ENCODE measurements at regions of chr22 and their contacts with region 1.

Region 1: GRCh38 chr22:23178512-23179254 is 1.6 kb upstream of the BCR start:
- DNase-seq: peak; percentile 55 to 63
- ATAC-seq: peak; percentile 54 to 82; a peak in 4 of 6 replicates
- H3K4me3 ChIP-seq: no peak overlapping the region
- H3K27ac ChIP-seq: no peak overlapping the region
- H3K4me1 ChIP-seq: peaks cover 28% of the 10 kb centered on the region
- CTCF ChIP-seq: peak; percentile 83
- EP300 ChIP-seq: no peak
- POLR2A ChIP-seq: no peak
- RAD21 ChIP-seq: peak; percentile 86 to 91

Region 2: GRCh38 chr22:23163665-23164064 is 15.0 kb before region 1 on chr22:
- CTCF ChIA-PET with region 1: interaction called, 10 read pairs
- POLR2A ChIA-PET with region 1: no interaction called
- DNase-seq: no peak
- ATAC-seq: no peak
- H3K4me3 ChIP-seq: no peak overlapping the region
- H3K27ac ChIP-seq: no peak overlapping the region
- H3K4me1 ChIP-seq: no peaks in the 10 kb centered on the region
- CTCF ChIP-seq: no peak
- EP300 ChIP-seq: no peak
- POLR2A ChIP-seq: no peak
- RAD21 ChIP-seq: no peak

Region 3: DNA sequence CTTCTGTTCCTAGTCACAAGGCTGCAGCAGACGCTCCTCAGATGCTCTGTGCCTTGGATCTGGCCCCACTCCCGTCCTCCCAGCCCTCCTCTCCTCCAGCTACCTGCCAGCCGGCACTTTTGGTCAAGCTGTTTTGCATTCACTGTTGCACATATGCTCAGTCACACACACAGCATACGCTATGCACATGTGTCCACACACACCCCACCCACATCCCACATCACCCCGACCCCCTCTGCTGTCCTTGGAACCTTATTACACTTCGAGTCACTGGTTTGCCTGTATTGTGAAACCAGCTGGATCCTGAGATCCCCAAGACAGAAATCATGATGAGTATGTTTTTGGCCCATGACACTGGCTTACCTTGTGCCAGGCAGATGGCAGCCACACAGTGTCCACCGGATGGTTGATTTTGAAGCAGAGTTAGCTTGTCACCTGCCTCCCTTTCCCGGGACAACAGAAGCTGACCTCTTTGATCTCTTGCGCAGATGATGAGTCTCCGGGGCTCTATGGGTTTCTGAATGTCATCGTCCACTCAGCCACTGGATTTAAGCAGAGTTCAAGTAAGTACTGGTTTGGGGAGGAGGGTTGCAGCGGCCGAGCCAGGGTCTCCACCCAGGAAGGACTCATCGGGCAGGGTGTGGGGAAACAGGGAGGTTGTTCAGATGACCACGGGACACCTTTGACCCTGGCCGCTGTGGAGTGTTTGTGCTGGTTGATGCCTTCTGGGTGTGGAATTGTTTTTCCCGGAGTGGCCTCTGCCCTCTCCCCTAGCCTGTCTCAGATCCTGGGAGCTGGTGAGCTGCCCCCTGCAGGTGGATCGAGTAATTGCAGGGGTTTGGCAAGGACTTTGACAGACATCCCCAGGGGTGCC is 111.4 kb after region 1 on chr22:
- CTCF ChIA-PET with region 1: interaction called, 186 read pairs
- POLR2A ChIA-PET with region 1: no interaction called
- DNase-seq: peak; percentile 25 to 69
- ATAC-seq: peak; percentile 84 to 90
- H3K4me3 ChIP-seq: no peak overlapping the region
- H3K27ac ChIP-seq: no peak overlapping the region
- H3K4me1 ChIP-seq: 0 out of 3 replicates have a peak, but pooled peaks cover 2% of the 10 kb centered on the region
- CTCF ChIP-seq: peak; percentile 47
- EP300 ChIP-seq: no peak
- POLR2A ChIP-seq: no peak
- RAD21 ChIP-seq: peak; percentile 18; a peak in 2 of 5 replicates